ENCODE measurements at regions of chr11 and their contacts with region 1.

Region 1: DNA sequence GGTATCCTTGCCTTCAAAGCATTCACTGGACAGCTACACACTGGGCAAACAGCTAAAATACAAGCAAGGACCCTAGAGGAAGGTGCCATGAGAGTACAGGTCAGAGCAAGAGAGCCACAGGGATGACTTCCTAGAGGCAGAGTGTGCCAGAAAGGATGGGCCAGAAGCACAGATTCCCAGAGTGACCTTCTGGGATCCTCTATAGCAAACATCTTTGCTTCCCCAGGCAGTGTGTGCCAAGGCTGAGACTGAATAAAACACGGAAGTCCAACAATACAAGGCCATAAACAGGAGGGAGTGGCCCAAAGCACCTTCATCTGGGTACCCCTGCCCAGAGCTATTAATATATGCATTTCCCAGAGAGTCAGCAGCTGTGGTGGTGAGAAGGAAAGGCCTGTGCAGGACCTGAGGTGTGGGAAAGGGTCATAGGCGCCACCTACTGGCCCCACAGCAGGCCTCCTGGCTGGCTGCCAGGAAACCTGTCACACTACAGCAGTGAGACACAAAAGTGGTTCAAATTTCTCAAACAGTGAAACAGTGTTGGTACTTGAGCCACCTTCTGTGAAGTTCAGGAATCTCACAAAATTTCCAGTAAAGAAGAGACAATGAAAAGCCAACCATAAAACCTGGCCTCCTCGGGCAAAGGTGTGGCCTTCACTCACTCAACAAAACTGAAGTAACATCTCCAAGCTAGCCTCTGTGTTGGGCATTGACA is 20.3 kb downstream of the CLPB start:
- DNase-seq: no peak
- H3K4me3 ChIP-seq: no peak overlapping the region
- CTCF ChIP-seq: peak; percentile 92

Region 2: GRCh38 chr11:72024069-72024754 is 389.9 kb before region 1 on chr11:
- CTCF ChIA-PET with region 1: interaction called, 13 read pairs
- POLR2A ChIA-PET with region 1: no interaction called
- DNase-seq: no peak
- H3K4me3 ChIP-seq: no peak overlapping the region
- CTCF ChIP-seq: no peak

Region 3: DNA sequence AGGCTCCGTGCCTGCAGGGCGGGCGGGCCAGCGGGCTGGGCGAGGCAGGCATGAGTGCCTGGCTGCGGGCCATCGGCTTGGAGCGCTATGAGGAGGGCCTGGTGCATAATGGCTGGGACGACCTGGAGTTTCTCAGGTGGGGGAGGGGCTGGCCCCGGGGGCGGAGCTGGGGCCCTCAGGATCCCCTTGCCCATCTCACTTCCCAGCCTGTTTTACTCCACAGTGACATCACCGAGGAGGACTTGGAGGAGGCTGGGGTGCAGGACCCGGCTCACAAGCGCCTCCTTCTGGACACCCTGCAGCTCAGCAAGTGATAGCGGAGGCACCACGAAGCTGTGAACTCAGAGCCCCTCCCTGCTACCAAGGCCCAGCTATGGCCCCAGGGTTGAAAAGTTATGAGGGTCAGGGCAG is 176.0 kb before region 1 on chr11:
- CTCF ChIA-PET with region 1: interaction called, 10 read pairs
- POLR2A ChIA-PET with region 1: interaction called, 5 read pairs
- DNase-seq: no peak
- H3K4me3 ChIP-seq: no peak overlapping the region
- CTCF ChIP-seq: peak; percentile 82

Region 4: DNA sequence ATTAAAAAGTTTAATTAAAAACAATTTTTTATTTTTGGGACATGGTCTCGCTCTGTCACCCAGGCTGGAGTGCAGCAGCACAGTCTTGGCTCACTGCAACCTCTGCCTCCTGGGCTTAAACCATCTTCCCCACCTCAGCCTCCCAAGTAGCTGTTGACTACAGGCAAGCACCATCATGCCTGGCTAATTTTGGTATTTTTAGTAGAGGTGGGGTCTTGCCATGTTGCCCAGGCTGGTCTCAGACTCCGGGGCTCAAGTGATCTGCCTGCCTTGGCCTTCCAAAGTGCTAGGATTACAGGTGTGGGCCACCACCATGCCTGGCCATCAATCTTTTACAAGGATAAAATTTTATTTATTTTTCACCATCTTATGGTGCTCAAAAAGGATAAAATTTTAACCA is 126.8 kb before region 1 on chr11:
- CTCF ChIA-PET with region 1: interaction called, 17 read pairs
- POLR2A ChIA-PET with region 1: no interaction called
- DNase-seq: no peak
- H3K4me3 ChIP-seq: no peak overlapping the region
- CTCF ChIP-seq: no peak

Region 5: DNA sequence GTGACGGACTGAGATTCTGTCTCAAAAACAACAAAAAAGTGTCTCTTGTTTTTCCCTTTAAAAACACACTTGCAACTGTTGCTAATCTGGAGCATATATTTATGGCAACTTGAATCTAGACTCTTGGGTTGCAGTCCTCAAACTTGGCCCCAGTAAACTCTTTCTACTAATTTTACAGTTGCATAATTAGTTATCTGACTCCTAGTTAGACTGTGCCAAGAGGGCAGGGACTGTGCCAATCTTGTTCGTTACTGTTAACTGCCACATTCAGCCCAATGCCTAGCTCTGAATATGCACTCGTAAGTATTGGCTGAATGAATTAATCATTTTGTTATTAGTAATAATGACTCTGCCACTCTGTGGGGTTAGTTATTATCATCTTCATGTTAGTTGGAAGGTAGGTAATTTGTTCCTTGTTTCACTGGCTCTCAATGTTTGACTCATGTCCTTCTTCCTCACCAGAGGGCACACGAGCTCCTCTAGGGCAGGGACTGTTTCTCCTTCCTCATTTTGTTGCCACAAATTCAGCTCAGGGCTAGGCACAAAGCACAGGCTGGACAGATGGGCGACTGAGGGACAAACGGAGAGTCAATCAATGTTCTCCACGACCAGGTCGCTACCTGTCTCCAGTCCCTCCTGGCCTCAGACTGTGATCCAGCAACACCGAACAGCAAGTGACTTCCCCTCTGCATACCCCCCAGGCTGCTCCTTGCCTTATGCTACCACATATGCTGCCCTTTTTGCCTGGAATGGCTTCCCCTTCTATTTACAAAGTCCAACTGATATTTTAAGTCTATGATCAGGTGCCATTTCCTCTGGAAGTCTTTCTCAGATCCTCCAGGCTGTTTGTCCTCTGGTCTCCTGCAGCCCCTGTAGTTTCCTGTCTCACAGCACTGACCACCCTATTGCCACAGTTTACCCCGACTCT is 11.2 kb after region 1 on chr11:
- CTCF ChIA-PET with region 1: interaction called, 229 read pairs
- POLR2A ChIA-PET with region 1: no interaction called
- DNase-seq: no peak
- H3K4me3 ChIP-seq: no peak overlapping the region
- CTCF ChIP-seq: no peak

Region 6: DNA sequence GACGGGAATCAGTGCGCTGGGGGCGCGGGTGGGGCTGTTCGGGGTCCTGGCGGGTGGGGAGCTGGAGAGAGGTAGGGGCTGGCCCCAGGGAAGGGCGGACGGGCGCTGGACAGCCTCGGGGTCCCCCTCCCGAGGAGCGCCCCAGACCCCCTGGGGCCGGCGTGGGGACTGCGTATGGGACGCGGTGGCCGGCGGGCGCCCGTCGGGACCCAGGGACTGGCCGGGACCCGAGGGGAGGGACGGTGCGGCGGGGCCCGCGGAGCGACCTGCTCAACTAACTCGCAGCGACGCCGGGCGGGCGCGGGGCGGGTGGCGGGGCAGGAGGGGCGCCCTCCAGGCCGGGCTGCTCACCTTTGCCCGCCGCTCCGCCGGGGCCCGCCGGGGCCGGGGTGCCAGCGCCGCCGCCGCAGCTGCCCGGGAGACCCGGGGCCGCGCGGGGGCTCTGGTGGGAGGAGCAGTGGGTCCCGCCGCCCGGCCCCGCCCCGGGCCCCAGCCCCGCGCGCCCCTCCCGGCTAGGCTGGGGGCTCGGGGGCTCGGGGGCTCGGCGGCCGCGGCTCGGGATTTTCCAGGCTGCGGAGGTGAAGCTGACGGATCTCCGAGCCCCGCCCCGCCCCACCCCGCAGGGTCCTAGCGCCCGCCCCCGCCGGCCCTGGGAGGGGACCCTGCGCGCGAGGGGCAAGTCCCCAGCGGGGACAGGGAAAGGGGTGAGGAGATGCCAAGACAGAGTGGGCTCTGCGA is 367.4 kb after region 1 on chr11:
- CTCF ChIA-PET with region 1: no interaction called
- POLR2A ChIA-PET with region 1: no interaction called
- DNase-seq: no peak
- H3K4me3 ChIP-seq: peak overlapping the region; percentile 53
- CTCF ChIP-seq: no peak

Region 7: DNA sequence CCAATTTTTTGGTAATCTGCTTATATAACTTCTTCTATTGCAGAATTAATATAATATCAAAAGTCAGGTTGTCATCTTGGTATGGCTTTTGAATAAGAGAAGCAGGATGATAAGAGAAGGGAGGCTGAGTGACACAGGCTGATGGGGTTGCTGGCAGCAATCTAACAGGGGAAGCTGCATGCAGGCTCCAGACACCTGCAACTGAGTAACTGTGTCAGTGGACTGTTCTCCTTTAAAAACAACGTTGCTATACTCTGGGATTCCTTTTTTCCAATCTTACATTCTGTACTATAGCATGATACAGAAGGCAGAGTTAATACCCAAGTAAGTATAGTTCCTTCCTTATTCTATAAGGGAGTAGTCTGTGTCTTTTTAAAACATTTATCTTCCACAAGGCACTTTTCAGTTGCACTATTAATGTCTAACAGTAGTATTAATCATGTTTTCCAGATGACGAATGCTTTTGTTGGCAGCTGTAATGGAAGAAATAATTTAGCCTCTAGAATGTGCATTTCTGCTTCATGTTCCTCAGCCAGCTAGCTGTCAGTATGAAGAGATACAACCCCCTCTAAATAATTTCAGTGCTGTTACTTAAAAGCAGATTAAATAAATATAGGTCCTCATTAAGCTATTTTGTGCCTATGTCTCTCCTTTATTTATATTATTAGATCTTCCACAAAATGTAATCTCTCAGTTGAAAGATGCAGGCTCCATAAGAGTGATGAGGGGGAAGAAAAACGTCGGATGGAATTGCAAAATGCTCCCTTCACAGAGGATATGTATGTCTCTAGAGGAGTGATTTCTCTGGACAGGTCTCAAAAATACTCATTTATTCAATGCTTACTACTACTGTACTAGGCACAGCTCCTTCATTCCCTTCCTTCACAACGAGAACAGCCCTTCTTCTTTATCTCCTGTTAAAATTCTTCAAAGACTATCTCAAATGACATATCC is 450.9 kb after region 1 on chr11:
- CTCF ChIA-PET with region 1: no interaction called
- POLR2A ChIA-PET with region 1: no interaction called
- DNase-seq: no peak
- H3K4me3 ChIP-seq: no peak overlapping the region
- CTCF ChIP-seq: no peak

Measured in AG04449 (cell line).